Activated CD4-positive, alpha-beta T cell treated with anti-CD3 and anti-CD28 coated beads, Interleukin-2, amount 10 ng/mL, durations not matched to agents 24 days and 14 days (primary cell): ENCODE measurements at regions of chr7 and their contacts with region 1.

Region 1: GRCh38 chr7:24819916-24820689 is 62.8 kb upstream of the GSDME start:
- DNase-seq: peak; percentile 94
- H3K4me3 Mint-ChIP-seq: peak overlapping the region; percentile 71
- H3K27ac Mint-ChIP-seq: peak overlapping the region; percentile 96
- H3K4me1 Mint-ChIP-seq: peaks cover 44% of the 10 kb centered on the region
- H3K27me3 Mint-ChIP-seq: no peaks in the 10 kb centered on the region

Region 2: GRCh38 chr7:24741691-24742504 is 78.2 kb before region 1 on chr7:
- intact Hi-C with region 1: no loop called
- DNase-seq: no peak
- H3K4me3 Mint-ChIP-seq: no peak overlapping the region
- H3K27ac Mint-ChIP-seq: no peak overlapping the region
- H3K4me1 Mint-ChIP-seq: no peaks in the 10 kb centered on the region
- H3K27me3 Mint-ChIP-seq: peaks cover 15% of the 10 kb centered on the region

Region 3: GRCh38 chr7:24869572-24869971 is 49.5 kb after region 1 on chr7:
- intact Hi-C with region 1: loop called (anchors 1 kb)
- DNase-seq: no peak
- H3K4me3 Mint-ChIP-seq: no peak overlapping the region
- H3K27ac Mint-ChIP-seq: peak overlapping the region; percentile 2
- H3K4me1 Mint-ChIP-seq: peaks cover 43% of the 10 kb centered on the region
- H3K27me3 Mint-ChIP-seq: no peaks in the 10 kb centered on the region

Region 4: GRCh38 chr7:24921362-24921679 is 101.2 kb after region 1 on chr7:
- intact Hi-C with region 1: loop called (anchors 1 kb)
- DNase-seq: peak; percentile 79
- H3K4me3 Mint-ChIP-seq: peak overlapping the region; percentile 64
- H3K27ac Mint-ChIP-seq: peak overlapping the region; percentile 92
- H3K4me1 Mint-ChIP-seq: peaks cover 88% of the 10 kb centered on the region
- H3K27me3 Mint-ChIP-seq: no peaks in the 10 kb centered on the region

Region 5: DNA sequence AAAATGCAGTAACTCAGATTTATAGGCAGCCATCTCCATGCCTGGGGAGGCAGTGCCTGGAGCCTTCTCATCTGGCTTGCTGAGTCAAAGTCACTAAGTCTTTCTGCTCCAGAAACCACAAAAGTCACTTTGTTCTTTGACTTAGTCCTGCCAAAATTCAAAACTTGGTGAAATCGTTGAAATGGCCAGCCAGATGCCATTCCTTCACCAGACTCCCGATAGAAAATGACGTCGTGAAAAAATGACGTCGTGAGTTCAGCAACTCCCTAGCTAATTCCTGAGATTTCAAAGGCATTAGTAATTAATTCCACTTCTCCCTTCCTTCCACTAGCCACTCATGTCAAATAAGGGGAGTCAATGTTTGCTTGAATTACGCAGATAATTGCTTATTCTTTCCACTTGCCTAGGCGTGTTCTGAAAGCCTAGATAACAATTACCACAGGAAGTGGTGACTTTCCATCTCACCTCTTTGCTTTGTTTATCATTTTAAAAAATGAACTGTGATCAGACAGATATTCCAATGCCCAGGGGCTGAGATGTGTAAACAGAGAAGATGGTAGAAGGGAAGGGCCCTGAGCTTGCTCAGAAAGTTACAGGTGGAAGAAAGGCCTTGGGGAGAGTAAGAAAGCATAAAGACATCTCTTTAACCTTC is 208.4 kb after region 1 on chr7:
- intact Hi-C with region 1: loop called (anchors 1 kb)
- DNase-seq: peak; percentile 82
- H3K4me3 Mint-ChIP-seq: peak overlapping the region; percentile 48
- H3K27ac Mint-ChIP-seq: peak overlapping the region; percentile 87
- H3K4me1 Mint-ChIP-seq: peaks cover 45% of the 10 kb centered on the region
- H3K27me3 Mint-ChIP-seq: peaks cover 10% of the 10 kb centered on the region

Region 6: GRCh38 chr7:25093268-25093826 is 273.2 kb after region 1 on chr7:
- intact Hi-C with region 1: loop called (anchors 1 kb)
- DNase-seq: peak; percentile 94
- H3K4me3 Mint-ChIP-seq: no peak overlapping the region
- H3K27ac Mint-ChIP-seq: no peak overlapping the region
- H3K4me1 Mint-ChIP-seq: peaks cover 13% of the 10 kb centered on the region
- H3K27me3 Mint-ChIP-seq: peaks cover 7% of the 10 kb centered on the region